ENCODE measurements at regions of chr20 and their contacts with region 1.

Region 1: GRCh38 chr20:561437-562231 is 18.0 kb upstream of the CSNK2A1 start:
- DNase-seq: peak; percentile 65 to 88
- H3K4me3 ChIP-seq: no peak overlapping the region
- H3K27ac ChIP-seq: no peak overlapping the region
- H3K4me1 ChIP-seq: peaks cover 0 to 7% (median 3%) of the 10 kb centered on the region in 4 donors
- H3K27me3 ChIP-seq: peaks cover 0 to 68% (median 5%) of the 10 kb centered on the region in 3 donors
- CTCF ChIP-seq: peak in 5 of 7 experiments; percentile 92 to 98 (median 93)
- EP300 ChIP-seq: no peak
- POLR2A ChIP-seq: no peak

Region 2: GRCh38 chr20:621125-621756 is 59.6 kb after region 1 on chr20:
- intact Hi-C with region 1: no loop called
- DNase-seq: no peak
- H3K4me3 ChIP-seq: no peak overlapping the region
- H3K27ac ChIP-seq: no peak overlapping the region
- H3K4me1 ChIP-seq: no peaks in the 10 kb centered on the region
- H3K27me3 ChIP-seq: peaks cover 0 to 73% (median 7%) of the 10 kb centered on the region in 3 donors
- CTCF ChIP-seq: no peak
- EP300 ChIP-seq: no peak
- POLR2A ChIP-seq: no peak

Region 3: DNA sequence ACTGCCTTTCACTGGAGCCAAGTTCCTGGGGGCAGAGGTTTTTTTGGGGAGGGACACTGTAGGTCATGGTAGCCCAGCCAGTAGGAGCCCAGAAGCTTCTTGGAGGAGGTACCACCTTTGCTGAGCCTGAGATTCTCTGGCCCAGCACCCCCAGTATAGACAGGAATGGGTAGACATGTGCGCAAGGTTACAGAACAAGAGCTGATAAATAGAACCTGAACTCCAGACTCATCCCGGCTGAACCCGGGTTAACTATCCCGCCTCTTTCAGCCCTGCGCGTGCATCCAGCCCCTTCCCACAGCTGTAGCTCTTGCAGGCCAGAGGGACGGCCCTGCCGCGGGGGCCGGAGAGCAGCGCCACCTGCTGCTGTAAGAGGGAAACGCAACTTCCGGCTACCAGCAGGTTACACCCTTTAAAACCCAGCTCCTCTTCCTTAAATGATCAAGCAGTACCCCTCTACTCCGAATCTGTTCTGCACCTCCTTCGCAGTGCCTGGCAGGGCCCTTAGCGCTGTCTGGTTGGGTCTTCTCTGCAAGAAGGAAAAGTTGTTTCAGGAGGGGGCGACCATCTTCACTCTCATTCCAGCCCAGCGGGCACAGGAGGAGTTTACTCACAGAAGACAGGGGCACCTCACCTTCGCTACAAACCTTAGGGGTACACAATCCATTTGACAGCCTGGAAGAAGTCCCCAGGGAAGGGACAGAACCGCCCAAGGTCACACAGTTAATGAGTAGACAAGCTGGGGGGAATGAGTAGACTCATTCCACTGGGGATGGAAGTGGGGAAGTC is 83.9 kb after region 1 on chr20:
- intact Hi-C with region 1: loop called (anchors 10 kb)
- DNase-seq: peak; percentile 71 to 92
- H3K4me3 ChIP-seq: no peak overlapping the region
- H3K27ac ChIP-seq: peak overlapping the region in 1 of 5 donors; percentile 2
- H3K4me1 ChIP-seq: peaks cover 4 to 22% (median 14%) of the 10 kb centered on the region in 4 donors
- H3K27me3 ChIP-seq: peaks cover 0 to 20% (median 9%) of the 10 kb centered on the region in 3 donors
- CTCF ChIP-seq: peak in 5 of 7 experiments; percentile 45 to 86 (median 83)
- EP300 ChIP-seq: no peak
- POLR2A ChIP-seq: no peak

Region 4: GRCh38 chr20:736897-737296 is 175.3 kb after region 1 on chr20:
- intact Hi-C with region 1: loop called (anchors 5 kb)
- DNase-seq: no peak
- H3K4me3 ChIP-seq: no peak overlapping the region
- H3K27ac ChIP-seq: no peak overlapping the region
- H3K4me1 ChIP-seq: peaks cover 0 to 7% (median 5%) of the 10 kb centered on the region in 4 donors
- H3K27me3 ChIP-seq: peaks cover 0 to 23% (median 0%) of the 10 kb centered on the region in 3 donors
- CTCF ChIP-seq: no peak
- EP300 ChIP-seq: no peak
- POLR2A ChIP-seq: no peak